Transverse colon (tissue), 4 donors: ENCODE measurements at regions of chr12 and their contacts with region 1.

Region 1: GRCh38 chr12:73656378-73656777 is 881.3 kb upstream of the ATXN7L3B start:
- DNase-seq: no peak
- H3K4me3 ChIP-seq: no peak overlapping the region
- H3K27ac ChIP-seq: no peak overlapping the region
- H3K4me1 ChIP-seq: no peaks in the 10 kb centered on the region
- H3K27me3 ChIP-seq: no peaks in the 10 kb centered on the region
- CTCF ChIP-seq: no peak
- EP300 ChIP-seq: no peak
- POLR2A ChIP-seq: no peak

Region 2: DNA sequence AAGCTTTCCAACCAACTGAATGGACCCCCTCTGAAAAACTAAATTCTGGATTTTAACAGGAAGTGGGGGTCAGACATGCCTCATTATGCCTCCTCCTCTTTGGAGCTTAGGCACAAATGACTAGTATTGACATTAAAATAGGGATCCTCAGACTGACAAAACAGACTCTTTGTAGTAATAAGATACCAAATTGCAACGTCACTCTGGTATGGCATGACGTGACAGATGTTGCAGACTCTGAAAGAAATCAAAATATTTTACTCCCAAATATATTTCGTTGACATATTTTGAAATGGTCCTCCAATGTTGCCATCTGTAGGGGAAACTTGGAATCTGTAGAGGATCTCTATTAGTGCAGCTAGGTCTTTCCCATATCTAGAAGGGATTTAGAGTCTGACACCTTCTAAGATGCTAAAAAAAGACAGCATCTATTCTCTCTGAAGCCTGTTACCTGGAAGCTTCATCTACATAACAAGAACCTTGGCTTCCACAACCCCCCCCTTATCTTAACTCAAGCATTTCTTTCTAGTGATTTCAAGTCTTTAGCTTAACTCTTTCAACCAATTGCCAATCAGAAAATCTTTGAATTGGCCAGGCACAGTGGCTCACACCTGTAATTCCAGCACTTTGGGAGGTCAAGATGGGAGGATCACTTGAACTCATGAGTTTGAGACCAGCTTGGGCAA is 841.1 kb before region 1 on chr12:
- in situ Hi-C with region 1: no loop called
- intact Hi-C with region 1: loop called (anchors 5 kb)
- DNase-seq: no peak
- H3K4me3 ChIP-seq: no peak overlapping the region
- H3K27ac ChIP-seq: no peak overlapping the region
- H3K4me1 ChIP-seq: no peaks in the 10 kb centered on the region
- H3K27me3 ChIP-seq: no peaks in the 10 kb centered on the region
- CTCF ChIP-seq: no peak
- EP300 ChIP-seq: no peak
- POLR2A ChIP-seq: no peak

Region 3: DNA sequence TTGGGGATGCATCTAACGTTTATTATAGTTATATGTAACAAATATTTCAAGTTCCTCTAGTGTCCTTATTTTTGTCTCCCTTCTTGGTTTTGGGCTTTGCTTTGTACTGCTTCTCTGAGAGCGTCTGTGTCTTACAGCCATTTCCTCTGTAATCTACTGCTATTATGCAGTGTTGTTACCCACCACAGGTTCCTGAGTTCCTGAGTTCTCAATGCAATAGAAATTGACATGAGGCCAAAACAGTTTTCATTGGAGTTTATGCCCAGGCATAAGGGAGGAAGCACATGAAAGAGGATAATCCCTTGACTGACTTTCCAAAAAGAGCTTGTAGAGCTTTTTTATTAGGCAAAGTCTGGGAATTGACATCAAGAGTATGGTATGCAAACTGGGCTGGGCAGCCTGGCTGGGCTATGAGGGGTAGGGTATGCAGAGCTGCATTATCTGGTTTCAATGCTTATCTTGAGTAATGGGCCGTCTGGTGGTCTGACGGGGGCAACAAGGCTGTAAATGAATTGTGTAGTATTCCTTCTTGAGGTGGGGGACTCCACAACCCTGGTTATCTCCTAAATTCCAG is 158.8 kb after region 1 on chr12:
- in situ Hi-C with region 1: no loop called
- intact Hi-C with region 1: no loop called
- DNase-seq: no peak
- H3K4me3 ChIP-seq: no peak overlapping the region
- H3K27ac ChIP-seq: no peak overlapping the region
- H3K4me1 ChIP-seq: no peaks in the 10 kb centered on the region
- H3K27me3 ChIP-seq: no peaks in the 10 kb centered on the region
- CTCF ChIP-seq: no peak
- EP300 ChIP-seq: no peak
- POLR2A ChIP-seq: no peak